K562 (cell line): ENCODE measurements at regions of chr17 and their contacts with region 1.

Region 1: DNA sequence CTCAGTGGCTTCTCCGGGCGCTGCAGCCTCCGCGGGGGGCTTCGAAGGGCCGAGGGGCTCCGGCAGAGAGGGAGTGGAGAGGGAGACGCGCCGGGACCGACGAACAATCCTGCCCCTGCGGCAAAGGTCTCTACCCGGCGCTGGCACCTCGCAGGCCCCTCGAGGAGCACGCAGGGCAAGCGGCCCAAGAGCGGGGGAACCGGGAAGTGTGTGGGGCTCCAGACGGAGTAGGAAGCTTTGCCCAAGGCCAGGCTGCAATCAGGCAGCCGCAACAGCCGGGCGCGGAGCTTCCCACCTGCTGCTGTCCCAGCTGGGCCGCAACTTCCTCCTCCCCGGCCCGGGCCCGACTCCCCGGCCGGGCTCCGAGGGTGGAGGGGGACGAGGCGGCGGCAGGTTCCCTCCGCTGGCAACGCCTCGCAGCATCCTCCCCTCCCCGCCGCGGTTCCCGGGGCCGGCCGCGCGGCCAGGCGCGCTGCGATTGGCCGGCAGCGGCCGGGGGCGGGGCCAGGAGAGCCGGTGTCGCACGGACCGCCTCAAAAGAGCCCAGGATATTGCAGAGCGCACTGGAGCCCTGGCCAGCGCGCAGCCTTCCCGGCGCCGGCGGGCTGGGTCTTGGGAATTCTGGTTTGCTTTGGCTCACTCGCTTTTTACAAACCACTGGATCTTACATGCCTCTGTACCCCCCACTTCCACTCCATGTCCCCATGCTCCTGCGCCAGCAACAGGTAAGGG is at the start of gene KCNJ2:
- DNase-seq: peak; percentile 77 to 88 (median 84)
- ATAC-seq: peak; percentile 99
- H3K4me3 ChIP-seq: peak within 1 kb of the TSS; percentile 34
- H3K27ac ChIP-seq: no peak within 1 kb of the TSS
- H3K4me1 ChIP-seq: peaks cover 0 to 15% of the 10 kb centered on the region in 2 experiments; a peak in 3 of 5 replicates
- H3K27me3 ChIP-seq: peaks cover 0 to 2% of the 10 kb centered on the region in 2 experiments; a peak in 2 of 5 replicates
- CTCF ChIP-seq: no peak
- EP300 ChIP-seq: no peak
- POLR2A ChIP-seq: no peak
- RAD21 ChIP-seq: no peak
- polyA plus RNA-seq, gene KCNJ2: not detected

Region 2: DNA sequence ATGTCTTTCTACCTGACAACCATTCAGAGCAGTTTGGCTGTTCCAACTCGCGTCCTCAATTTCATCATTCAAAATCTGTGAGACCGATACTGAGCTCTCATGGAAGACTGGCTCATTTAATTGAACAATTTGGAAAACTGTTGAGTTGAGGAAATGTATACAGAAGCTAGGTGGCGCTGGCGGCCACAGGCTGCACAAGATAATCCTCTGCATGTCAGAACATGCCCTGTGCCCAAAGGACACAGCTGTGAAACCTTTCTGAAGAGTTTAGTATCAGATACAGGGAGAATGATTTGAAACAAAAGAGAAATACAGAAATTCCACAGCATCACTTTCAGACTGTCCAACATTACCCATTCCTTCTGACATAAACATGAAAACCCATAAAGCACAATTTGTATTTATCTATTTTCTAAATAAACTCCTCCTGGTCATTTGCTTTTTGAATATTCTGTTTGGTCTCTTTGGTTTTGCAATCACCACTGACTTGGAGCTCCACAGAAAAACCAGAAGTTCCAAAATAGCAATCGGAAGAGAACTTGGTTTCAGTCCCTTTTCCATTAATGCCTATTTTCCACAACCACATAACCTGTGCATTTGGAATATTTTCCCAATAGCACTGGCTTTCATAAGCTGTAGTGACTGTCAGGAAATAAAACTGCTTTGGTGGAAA is 561.8 kb before region 1 on chr17:
- CTCF ChIA-PET with region 1: no interaction called
- POLR2A ChIA-PET with region 1: no interaction called
- in situ Hi-C with region 1: no loop called
- intact Hi-C with region 1: loop called (anchors 10 kb)
- DNase-seq: peak in 3 of 4 experiments; percentile 15 to 36 (median 21)
- ATAC-seq: peak; percentile 73
- H3K4me3 ChIP-seq: no peak overlapping the region
- H3K27ac ChIP-seq: no peak overlapping the region
- H3K4me1 ChIP-seq: no peaks in the 10 kb centered on the region
- H3K27me3 ChIP-seq: no peaks in the 10 kb centered on the region
- CTCF ChIP-seq: peak; percentile 45 to 65 (median 57)
- EP300 ChIP-seq: no peak
- POLR2A ChIP-seq: no peak
- RAD21 ChIP-seq: peak; percentile 48 to 71

Region 3: DNA sequence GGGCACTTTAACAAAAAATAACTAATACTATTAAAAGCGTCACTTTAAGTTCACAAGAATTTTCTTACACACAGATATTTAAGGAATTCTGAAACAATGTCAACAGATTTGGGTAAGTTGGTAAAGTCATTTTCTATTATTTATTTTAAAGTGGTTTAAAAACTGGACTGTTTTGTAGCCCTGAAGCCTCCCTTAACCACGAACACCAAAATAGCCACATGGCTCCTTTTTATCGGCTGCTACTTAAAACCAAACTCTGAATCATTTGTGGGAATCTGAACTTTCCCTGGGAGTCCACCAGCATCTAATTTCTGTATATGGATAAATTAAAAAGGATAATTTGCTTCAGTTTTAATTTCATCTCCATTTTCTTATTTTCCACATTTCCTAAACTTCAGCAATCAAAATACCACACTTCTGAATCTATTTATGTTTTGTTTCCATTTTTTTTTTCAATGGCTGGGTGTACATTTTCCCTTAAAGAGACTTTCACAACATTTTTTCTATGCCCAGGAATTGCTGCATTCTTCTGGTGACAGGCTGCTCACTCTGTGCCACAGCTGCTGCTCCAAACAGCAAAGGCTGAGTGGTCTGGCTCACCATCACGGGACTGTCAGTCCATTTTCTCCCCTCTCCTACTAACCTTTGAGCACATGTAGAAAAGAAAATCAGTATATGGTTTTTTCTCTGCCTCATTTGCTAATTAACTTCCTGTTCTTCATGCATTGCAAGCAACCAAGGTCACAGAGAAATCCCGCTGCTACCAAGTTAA is 349.6 kb before region 1 on chr17:
- CTCF ChIA-PET with region 1: no interaction called
- POLR2A ChIA-PET with region 1: no interaction called
- in situ Hi-C with region 1: no loop called
- intact Hi-C with region 1: loop called (anchors 10 kb)
- DNase-seq: no peak
- ATAC-seq: no peak
- H3K4me3 ChIP-seq: no peak overlapping the region
- H3K27ac ChIP-seq: no peak overlapping the region
- H3K4me1 ChIP-seq: no peaks in the 10 kb centered on the region; a peak in 1 of 5 replicates
- H3K27me3 ChIP-seq: no peaks in the 10 kb centered on the region
- CTCF ChIP-seq: no peak
- EP300 ChIP-seq: no peak
- POLR2A ChIP-seq: no peak
- RAD21 ChIP-seq: no peak

Region 4: GRCh38 chr17:70144260-70144846 is 24.8 kb before region 1 on chr17:
- CTCF ChIA-PET with region 1: no interaction called
- POLR2A ChIA-PET with region 1: no interaction called
- in situ Hi-C with region 1: no loop called
- intact Hi-C with region 1: no loop called
- DNase-seq: peak in 1 of 4 experiments; percentile 15
- ATAC-seq: no peak
- H3K4me3 ChIP-seq: no peak overlapping the region
- H3K27ac ChIP-seq: no peak overlapping the region
- H3K4me1 ChIP-seq: no peaks in the 10 kb centered on the region
- H3K27me3 ChIP-seq: no peaks in the 10 kb centered on the region
- CTCF ChIP-seq: peak in 2 of 3 experiments; percentile 13 to 55; a peak in 4 of 6 replicates
- EP300 ChIP-seq: no peak
- POLR2A ChIP-seq: no peak
- RAD21 ChIP-seq: peak; percentile 69 to 81